ENCODE measurements at regions of chr17 and their contacts with region 1.

Region 1: DNA sequence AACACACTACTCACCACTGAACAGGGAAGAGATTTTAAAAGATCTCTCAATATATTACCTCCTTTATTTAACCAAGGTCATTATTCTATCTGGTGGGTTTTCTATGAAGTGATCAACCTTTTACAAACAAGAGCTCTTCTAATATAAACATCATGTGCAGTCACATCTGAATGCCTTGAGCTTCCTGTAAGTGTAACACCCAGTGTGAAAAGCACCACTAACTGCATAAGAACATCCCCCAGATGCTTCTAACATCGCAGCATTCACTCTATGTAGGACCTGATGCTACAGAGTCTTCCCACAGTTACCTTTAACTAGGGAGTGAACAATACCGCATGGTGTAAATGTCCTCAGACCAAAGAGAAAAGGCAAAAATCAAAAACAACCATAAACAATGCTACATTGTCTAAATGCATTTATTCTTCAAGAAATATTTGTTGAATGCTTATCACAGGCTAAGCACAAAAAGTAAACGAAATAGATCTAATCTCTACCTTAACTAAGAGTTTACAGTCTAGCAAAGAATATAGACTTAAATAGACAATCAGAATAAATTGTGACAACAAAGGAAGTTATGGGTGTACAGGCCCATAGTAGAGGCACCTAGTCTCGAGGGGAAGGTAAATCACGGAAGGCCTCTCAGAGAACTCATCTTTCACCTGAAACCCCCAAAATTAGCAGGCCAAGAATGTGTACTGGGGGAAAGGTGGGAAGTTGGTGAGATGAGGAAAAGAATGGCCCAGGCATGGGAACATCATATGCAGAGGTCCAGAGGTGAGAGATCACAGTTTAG is 16.2 kb downstream of the SKAP1 start:
- DNase-seq: no peak
- ATAC-seq: peak; percentile 43
- H3K4me3 Mint-ChIP-seq: peak overlapping the region; percentile 10
- H3K27ac Mint-ChIP-seq: peak overlapping the region; percentile 95
- H3K4me1 Mint-ChIP-seq: peaks cover 93% of the 10 kb centered on the region
- H3K27me3 Mint-ChIP-seq: no peaks in the 10 kb centered on the region

Region 2: DNA sequence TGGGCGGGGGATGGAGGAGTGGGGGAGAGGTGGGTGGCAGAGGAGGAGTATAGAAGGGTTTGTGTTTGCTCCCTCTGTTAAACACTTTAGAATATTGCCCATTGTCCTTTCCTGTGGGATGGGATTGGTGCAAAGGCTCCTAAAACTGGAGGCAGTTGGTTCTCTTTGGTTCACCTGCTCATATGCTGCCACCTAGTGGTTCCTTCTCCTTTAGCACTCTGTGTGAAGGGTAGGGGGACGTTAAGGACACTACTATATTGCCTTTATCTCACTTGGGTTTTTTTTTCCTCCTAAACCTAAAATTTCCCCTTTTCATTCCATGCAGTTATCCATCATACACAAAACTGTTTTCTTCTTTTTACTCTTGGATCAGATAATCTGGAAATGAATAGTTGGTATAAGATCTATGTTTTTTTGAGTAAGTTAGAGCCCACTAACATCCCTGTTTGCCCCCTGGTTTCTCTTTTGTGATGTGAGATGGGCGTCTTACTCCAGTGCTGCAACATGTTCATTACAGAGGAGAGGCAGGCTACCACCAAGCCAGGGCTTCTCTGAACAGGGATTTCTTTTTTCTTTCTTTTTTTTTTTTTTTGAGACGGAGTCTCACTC is 282.5 kb before region 1 on chr17:
- CTCF ChIA-PET with region 1: no interaction called
- POLR2A ChIA-PET with region 1: no interaction called
- intact Hi-C with region 1: no loop called
- DNase-seq: peak; percentile 68
- ATAC-seq: peak; percentile 85
- H3K4me3 Mint-ChIP-seq: no peak overlapping the region
- H3K27ac Mint-ChIP-seq: peak overlapping the region; percentile 2
- H3K4me1 Mint-ChIP-seq: no peaks in the 10 kb centered on the region
- H3K27me3 Mint-ChIP-seq: no peaks in the 10 kb centered on the region

Region 3: DNA sequence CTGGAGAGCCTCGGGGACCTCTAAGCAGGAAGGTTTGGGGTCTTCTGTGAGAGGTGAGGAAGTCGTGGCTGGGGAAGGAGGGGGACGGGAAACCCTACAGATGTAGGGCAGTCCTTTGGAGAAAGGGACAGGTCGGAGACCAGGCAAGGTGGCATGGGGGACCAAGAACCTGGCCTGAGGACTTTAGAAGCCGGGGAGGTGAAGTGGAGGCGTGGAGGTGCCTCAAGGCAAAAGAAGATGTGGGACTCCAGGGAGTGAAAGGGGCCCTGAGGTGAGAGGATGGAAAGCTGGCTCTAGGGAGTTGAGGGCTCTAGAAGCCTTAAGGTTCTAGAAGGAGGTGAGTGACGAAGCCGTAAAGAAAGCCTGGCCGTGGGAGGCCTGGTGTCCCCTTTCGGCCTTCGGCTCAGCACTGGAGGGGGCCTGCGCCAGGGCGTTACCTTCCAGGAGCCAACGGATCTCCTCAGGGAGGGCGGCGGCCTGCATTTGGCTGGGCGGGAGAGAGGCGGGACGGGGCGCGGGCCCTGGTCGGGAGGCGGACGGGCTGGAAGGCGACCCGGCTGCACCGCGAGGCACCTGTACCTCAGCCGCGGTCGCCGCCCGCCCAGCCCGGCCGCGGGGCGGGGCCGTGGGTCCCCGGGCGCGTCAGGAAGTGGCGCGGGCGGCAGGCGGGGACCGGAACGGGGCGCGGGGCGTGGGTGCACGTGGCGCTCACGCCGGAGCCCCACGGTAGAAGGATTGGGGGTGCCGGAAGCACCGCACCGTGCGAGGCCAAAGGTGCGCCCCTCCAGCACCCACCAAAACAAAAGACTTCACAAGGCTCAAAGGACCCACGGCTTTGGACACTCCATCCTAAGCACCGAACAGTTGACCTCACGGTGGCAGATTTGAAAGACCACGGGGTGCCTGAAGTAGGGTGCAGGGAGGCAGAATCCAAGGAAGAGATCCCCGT is 16.1 kb after region 1 on chr17 and contains the start of gene SKAP1:
- CTCF ChIA-PET with region 1: interaction called, 3 read pairs
- POLR2A ChIA-PET with region 1: interaction called, 6 read pairs
- intact Hi-C with region 1: loop called (anchors 1 kb)
- DNase-seq: peak; percentile 77
- ATAC-seq: peak; percentile 62
- H3K4me3 Mint-ChIP-seq: peak within 1 kb of the TSS; percentile 94
- H3K27ac Mint-ChIP-seq: peak within 1 kb of the TSS; percentile 98
- H3K4me1 Mint-ChIP-seq: peaks cover 57% of the 10 kb centered on the region
- H3K27me3 Mint-ChIP-seq: no peaks in the 10 kb centered on the region
- total RNA-seq, gene SKAP1: 76.1 to 109 TPM

Region 4: DNA sequence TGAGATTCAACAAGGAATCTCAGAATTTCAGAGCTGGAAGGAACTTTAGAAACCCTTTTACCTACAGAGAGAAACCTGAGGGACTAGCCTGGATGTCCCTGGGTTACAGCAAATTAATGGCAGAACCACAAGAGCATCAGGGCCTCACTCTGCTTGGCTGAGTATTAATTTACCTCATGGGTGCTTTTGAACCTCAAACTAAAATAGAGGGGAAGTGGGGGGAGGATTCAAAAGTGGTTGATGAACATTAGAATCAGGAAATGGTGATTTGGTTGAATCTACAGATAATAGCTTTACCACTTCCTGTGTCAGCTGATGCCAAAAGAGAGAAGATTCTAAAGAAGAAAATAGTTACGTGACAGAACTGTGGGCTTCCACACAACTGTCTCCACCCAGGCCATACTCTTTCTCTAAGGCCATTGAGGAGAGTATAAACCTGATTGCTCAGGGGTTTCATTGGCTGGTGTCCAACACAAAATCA is 27.5 kb after region 1 on chr17:
- CTCF ChIA-PET with region 1: interaction called, 6 read pairs
- POLR2A ChIA-PET with region 1: no interaction called
- intact Hi-C with region 1: loop called (anchors 1 to 5 kb)
- DNase-seq: peak; percentile 35
- ATAC-seq: peak; percentile 55
- H3K4me3 Mint-ChIP-seq: peak overlapping the region; percentile 31
- H3K27ac Mint-ChIP-seq: peak overlapping the region; percentile 91
- H3K4me1 Mint-ChIP-seq: peaks cover 95% of the 10 kb centered on the region
- H3K27me3 Mint-ChIP-seq: no peaks in the 10 kb centered on the region

Region 5: GRCh38 chr17:48915459-48916282 is 501.9 kb after region 1 on chr17:
- CTCF ChIA-PET with region 1: no interaction called
- POLR2A ChIA-PET with region 1: no interaction called
- intact Hi-C with region 1: loop called in 1 of 2 experiments (anchors 10 kb)
- DNase-seq: peak; percentile 77
- ATAC-seq: peak; percentile 95
- H3K4me3 Mint-ChIP-seq: peak overlapping the region; percentile 73
- H3K27ac Mint-ChIP-seq: peak overlapping the region; percentile 96
- H3K4me1 Mint-ChIP-seq: peaks cover 59% of the 10 kb centered on the region
- H3K27me3 Mint-ChIP-seq: no peaks in the 10 kb centered on the region